Natural killer cell (primary cell): ENCODE measurements at regions of chr2 and their contacts with region 1.

Region 1: GRCh38 chr2:134576478-134576877 is 142.3 kb downstream of the TMEM163 start:
- DNase-seq: peak in 1 of 2 donors; percentile 60
- ATAC-seq: peak in 2 of 3 donors; percentile 45 to 46
- H3K4me3 ChIP-seq: no peak overlapping the region
- H3K4me3 Mint-ChIP-seq: no peak overlapping the region
- H3K27ac ChIP-seq: no peak overlapping the region
- H3K27ac Mint-ChIP-seq: peak overlapping the region in 1 of 2 donors; percentile 30
- H3K4me1 ChIP-seq: peaks cover 9% of the 10 kb centered on the region
- H3K4me1 Mint-ChIP-seq: peaks cover 9 to 38% of the 10 kb centered on the region in 2 donors
- H3K27me3 ChIP-seq: no peaks in the 10 kb centered on the region
- H3K27me3 Mint-ChIP-seq: no peaks in the 10 kb centered on the region
- CTCF ChIP-seq: peak; percentile 15

Region 2: GRCh38 chr2:134603966-134604365 is 27.5 kb after region 1 on chr2:
- intact Hi-C with region 1: no loop called
- DNase-seq: no peak
- ATAC-seq: no peak
- H3K4me3 ChIP-seq: no peak overlapping the region
- H3K4me3 Mint-ChIP-seq: no peak overlapping the region
- H3K27ac ChIP-seq: no peak overlapping the region
- H3K27ac Mint-ChIP-seq: peak overlapping the region in 1 of 2 donors; percentile 56
- H3K4me1 ChIP-seq: no peaks in the 10 kb centered on the region
- H3K4me1 Mint-ChIP-seq: peaks cover 0 to 18% of the 10 kb centered on the region in 2 donors
- H3K27me3 ChIP-seq: no peaks in the 10 kb centered on the region
- H3K27me3 Mint-ChIP-seq: peaks cover 0 to 2% of the 10 kb centered on the region in 2 donors
- CTCF ChIP-seq: no peak

Region 3: GRCh38 chr2:134692499-134692898 is 116.0 kb after region 1 on chr2:
- intact Hi-C with region 1: loop called (anchors 1 kb)
- DNase-seq: peak in 1 of 2 donors; percentile 70
- ATAC-seq: peak; percentile 56 to 86 (median 85)
- H3K4me3 ChIP-seq: no peak overlapping the region
- H3K4me3 Mint-ChIP-seq: no peak overlapping the region
- H3K27ac ChIP-seq: no peak overlapping the region
- H3K27ac Mint-ChIP-seq: no peak overlapping the region
- H3K4me1 ChIP-seq: peaks cover 3% of the 10 kb centered on the region
- H3K4me1 Mint-ChIP-seq: peaks cover 4% of the 10 kb centered on the region in 2 donors
- H3K27me3 ChIP-seq: no peaks in the 10 kb centered on the region
- H3K27me3 Mint-ChIP-seq: no peaks in the 10 kb centered on the region
- CTCF ChIP-seq: peak; percentile 16